Spleen (tissue), 13 donors: ENCODE measurements at regions of chr1 and their contacts with region 1.

Region 1: GRCh38 chr1:56578963-56579875 is at the start of gene PLPP3:
- DNase-seq: peak; percentile 91
- H3K4me3 ChIP-seq: peak within 1 kb of the TSS; percentile 61 to 93 (median 80)
- H3K27ac ChIP-seq: peak within 1 kb of the TSS; percentile 75 to 93 (median 88)
- H3K4me1 ChIP-seq: peaks cover 14 to 61% (median 50%) of the 10 kb centered on the region in 6 donors
- H3K27me3 ChIP-seq: peaks cover 0 to 15% (median 0%) of the 10 kb centered on the region in 7 donors
- CTCF ChIP-seq: peak in 9 of 11 experiments; percentile 17 to 66 (median 42)
- POLR2A ChIP-seq: peak in 1 of 3 donors; percentile 81
- total RNA-seq, gene PLPP3: 40.3 to 90.0 (median 65.6) TPM

Region 2: DNA sequence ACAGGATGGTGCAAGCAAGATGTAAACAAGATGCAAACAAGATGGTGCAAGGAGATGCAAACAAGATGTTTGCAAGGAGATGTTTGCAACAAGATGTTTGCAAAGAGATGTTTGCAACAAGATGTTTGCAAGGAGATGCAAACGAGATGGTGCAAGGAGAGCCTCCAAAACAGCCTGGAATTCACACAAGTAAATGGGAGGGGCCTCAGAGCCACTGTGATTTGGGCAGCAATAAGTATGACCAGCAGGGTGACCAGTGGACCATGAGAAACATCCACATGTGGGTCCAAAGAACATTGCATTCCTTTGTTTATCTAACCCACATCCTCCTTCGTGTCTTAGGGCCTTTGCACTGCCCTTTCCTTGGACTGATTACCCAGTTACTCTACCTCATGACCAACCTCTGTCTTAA is 162.7 kb before region 1 on chr1:
- intact Hi-C with region 1: loop called (anchors 5 kb)
- DNase-seq: no peak
- H3K4me3 ChIP-seq: no peak overlapping the region
- H3K27ac ChIP-seq: no peak overlapping the region
- H3K4me1 ChIP-seq: peaks cover 0 to 29% (median 15%) of the 10 kb centered on the region in 6 donors
- H3K27me3 ChIP-seq: no peaks in the 10 kb centered on the region
- CTCF ChIP-seq: peak in 1 of 11 experiments; percentile 15
- POLR2A ChIP-seq: no peak

Region 3: DNA sequence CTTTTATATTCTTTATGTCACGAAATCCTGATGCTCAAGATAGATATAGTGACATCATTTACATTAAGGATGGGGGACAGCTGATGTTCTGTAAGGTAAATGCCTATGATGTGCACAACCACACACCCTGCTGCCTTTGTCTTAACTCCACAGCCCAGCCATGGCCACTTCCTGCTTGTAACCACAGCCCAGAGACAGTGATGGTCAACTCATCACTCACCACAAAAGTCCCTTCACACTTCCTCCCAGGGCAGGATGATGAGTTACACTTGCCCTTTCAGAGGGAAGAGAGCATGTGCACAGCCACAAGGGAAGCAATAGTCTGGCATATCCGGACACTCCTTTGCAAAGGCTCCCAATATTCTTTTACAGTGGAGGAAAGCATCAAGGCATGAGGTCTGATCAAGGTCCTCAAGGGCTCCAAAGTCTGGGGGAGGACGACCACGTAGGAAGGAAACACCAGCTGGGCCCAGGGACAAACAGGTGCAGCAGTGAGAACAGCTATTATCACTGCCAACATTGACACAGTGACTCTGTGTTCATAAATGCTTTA is 53.7 kb before region 1 on chr1:
- intact Hi-C with region 1: loop called (anchors 10 kb)
- DNase-seq: peak; percentile 86
- H3K4me3 ChIP-seq: no peak overlapping the region
- H3K27ac ChIP-seq: peak overlapping the region in 5 of 8 donors; percentile 41 to 69 (median 57)
- H3K4me1 ChIP-seq: peaks cover 34 to 87% (median 73%) of the 10 kb centered on the region in 6 donors
- H3K27me3 ChIP-seq: no peaks in the 10 kb centered on the region
- CTCF ChIP-seq: no peak
- POLR2A ChIP-seq: no peak